RWPE1 (cell line): ENCODE measurements at regions of chrX and their contacts with region 1.

Region 1: DNA sequence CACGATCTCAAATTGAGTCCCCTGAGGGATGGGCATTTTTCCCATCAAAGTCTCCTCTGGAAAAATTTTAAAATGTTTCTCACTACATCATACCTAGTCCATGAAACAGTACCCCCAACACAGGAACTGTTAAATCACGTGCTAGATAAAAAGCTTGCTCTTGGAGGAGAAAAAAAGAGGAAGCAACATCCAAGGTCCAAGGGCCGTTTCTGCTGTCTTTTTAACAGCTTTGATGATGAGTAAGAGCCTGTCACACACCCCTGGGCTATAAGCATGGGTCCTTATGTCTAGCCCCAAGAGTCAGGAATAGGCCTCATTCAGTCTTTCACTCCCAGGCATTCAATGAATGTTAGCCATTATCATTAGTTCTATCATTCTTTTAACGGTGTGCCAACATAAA is 128.9 kb downstream of the SH3KBP1 start:
- DNase-seq: peak; percentile 5
- H3K27ac ChIP-seq: no peak overlapping the region
- CTCF ChIP-seq: no peak

Region 2: GRCh38 chrX:19715711-19716638 is 42.6 kb before region 1 on chrX:
- CTCF ChIA-PET with region 1: no interaction called
- POLR2A ChIA-PET with region 1: interaction called, 10 read pairs
- DNase-seq: no peak
- H3K27ac ChIP-seq: no peak overlapping the region
- CTCF ChIP-seq: no peak